MCF 10A (cell line): ENCODE measurements at regions of chr3 and their contacts with region 1.

Region 1: DNA sequence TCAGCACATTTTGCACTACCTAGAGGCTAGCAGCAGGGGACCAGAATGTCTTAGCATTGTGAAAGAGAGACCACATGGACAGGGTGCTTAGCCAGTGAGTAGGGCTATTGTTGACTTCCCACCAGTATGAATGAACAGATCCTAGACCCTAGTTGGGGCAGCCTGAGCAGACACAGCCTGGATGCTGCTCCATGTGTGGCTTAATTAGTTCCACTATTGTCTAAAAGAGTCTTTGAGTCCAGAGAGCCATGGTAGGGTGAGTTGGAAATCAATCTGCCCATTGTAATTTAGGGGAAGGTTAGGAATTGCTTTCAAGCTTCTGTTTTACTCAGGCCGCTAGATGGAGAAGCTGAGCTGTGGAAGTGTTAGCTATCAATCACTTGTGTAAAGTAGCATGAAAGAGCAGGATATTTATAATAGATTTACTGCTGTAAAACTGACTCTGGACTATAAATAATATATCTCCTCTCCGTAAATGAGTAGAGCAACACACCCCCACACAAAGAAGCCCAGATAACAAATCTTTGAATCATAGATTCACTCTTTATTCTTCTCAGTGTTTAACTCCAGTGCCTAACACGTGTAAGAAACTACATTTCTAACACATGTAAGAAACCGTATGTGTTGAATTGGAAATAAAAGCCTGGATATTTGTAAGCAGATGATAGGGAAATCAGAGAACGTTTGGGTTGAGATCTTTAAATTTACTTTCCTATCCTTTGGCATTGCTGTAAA is 4.1 kb upstream of the GCSAM start:
- DNase-seq: peak; percentile 74
- H3K4me3 Mint-ChIP-seq: no peak overlapping the region
- H3K27ac Mint-ChIP-seq: peak overlapping the region; percentile 22
- H3K4me1 Mint-ChIP-seq: peaks cover 26% of the 10 kb centered on the region
- H3K27me3 Mint-ChIP-seq: no peaks in the 10 kb centered on the region
- CTCF ChIP-seq: peak; percentile 64

Region 2: DNA sequence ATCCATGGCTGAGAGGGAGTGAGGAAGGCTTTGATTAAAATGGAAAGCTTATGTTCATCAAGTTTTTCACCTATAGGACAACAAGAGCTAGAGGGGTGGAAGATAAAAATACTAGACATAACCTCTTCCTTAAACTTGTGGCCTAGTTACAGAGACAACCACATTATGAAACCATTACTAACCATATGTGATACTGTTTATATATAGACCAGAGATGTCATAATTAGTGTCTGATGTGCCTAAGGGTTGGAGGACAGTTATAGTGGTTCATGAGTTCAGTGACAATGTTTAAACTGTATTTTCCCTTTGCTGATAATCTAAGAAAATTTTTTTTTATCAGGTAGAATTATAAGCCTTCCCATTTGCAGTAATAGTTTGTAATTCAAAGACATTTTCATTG is 254.3 kb before region 1 on chr3:
- CTCF ChIA-PET with region 1: no interaction called
- POLR2A ChIA-PET with region 1: no interaction called
- intact Hi-C with region 1: no loop called
- DNase-seq: no peak
- H3K4me3 Mint-ChIP-seq: no peak overlapping the region
- H3K27ac Mint-ChIP-seq: no peak overlapping the region
- H3K4me1 Mint-ChIP-seq: peaks cover 11% of the 10 kb centered on the region
- H3K27me3 Mint-ChIP-seq: no peaks in the 10 kb centered on the region
- CTCF ChIP-seq: no peak

Region 3: DNA sequence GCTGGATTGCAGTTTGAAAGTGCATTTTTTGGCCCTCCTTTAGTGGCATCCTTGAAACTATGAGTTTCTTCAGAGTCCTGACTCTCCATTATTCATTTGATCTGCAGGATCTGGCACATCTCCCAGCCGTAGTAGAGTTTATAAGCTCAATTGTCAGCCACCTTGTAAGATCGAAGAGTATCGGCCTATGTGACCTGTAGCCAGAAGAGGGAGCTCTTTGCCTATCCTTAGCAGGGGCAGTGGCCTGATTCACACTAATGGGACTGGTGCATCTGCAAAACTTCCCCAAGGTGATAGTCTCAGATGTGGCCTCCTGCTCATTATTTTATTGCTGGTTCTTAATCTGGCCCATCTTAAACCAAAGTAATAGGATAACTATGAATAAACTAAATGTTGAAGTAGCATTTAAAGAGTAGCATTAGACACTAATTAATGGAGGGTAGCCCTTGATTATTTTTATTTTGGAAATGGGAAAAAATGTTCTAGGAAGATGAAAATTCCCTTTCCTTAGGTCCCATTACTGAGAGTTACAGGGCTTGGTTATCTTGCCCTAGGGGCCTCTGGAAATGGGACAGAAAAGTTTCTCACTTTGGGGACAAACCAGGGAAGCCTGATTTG is 25.2 kb before region 1 on chr3:
- CTCF ChIA-PET with region 1: interaction called, 43 read pairs
- POLR2A ChIA-PET with region 1: interaction called, 5 read pairs
- intact Hi-C with region 1: no loop called
- DNase-seq: peak; percentile 82
- H3K4me3 Mint-ChIP-seq: no peak overlapping the region
- H3K27ac Mint-ChIP-seq: no peak overlapping the region
- H3K4me1 Mint-ChIP-seq: peaks cover 16% of the 10 kb centered on the region
- H3K27me3 Mint-ChIP-seq: no peaks in the 10 kb centered on the region
- CTCF ChIP-seq: peak; percentile 80

Region 4: GRCh38 chr3:112149136-112149535 is 12.0 kb after region 1 on chr3:
- CTCF ChIA-PET with region 1: interaction called, 14 read pairs
- POLR2A ChIA-PET with region 1: interaction called, 4 read pairs
- intact Hi-C with region 1: no loop called
- DNase-seq: peak; percentile 31
- H3K4me3 Mint-ChIP-seq: no peak overlapping the region
- H3K27ac Mint-ChIP-seq: no peak overlapping the region
- H3K4me1 Mint-ChIP-seq: no peaks in the 10 kb centered on the region
- H3K27me3 Mint-ChIP-seq: no peaks in the 10 kb centered on the region
- CTCF ChIP-seq: no peak

Region 5: GRCh38 chr3:112327371-112327951 is 190.3 kb after region 1 on chr3:
- CTCF ChIA-PET with region 1: interaction called, 5 read pairs
- POLR2A ChIA-PET with region 1: no interaction called
- intact Hi-C with region 1: loop called (anchors 1 kb)
- DNase-seq: peak; percentile 73
- H3K4me3 Mint-ChIP-seq: no peak overlapping the region
- H3K27ac Mint-ChIP-seq: no peak overlapping the region
- H3K4me1 Mint-ChIP-seq: no peaks in the 10 kb centered on the region
- H3K27me3 Mint-ChIP-seq: no peaks in the 10 kb centered on the region
- CTCF ChIP-seq: peak; percentile 54

Region 6: GRCh38 chr3:112519424-112520001 is 382.4 kb after region 1 on chr3:
- CTCF ChIA-PET with region 1: interaction called, 31 read pairs
- POLR2A ChIA-PET with region 1: interaction called, 3 read pairs
- intact Hi-C with region 1: loop called (anchors 1 kb)
- DNase-seq: peak; percentile 66
- H3K4me3 Mint-ChIP-seq: no peak overlapping the region
- H3K27ac Mint-ChIP-seq: no peak overlapping the region
- H3K4me1 Mint-ChIP-seq: no peaks in the 10 kb centered on the region
- H3K27me3 Mint-ChIP-seq: no peaks in the 10 kb centered on the region
- CTCF ChIP-seq: peak; percentile 69